Natural killer cell (primary cell): ENCODE measurements at regions of chr3 and their contacts with region 1.

Region 1: DNA sequence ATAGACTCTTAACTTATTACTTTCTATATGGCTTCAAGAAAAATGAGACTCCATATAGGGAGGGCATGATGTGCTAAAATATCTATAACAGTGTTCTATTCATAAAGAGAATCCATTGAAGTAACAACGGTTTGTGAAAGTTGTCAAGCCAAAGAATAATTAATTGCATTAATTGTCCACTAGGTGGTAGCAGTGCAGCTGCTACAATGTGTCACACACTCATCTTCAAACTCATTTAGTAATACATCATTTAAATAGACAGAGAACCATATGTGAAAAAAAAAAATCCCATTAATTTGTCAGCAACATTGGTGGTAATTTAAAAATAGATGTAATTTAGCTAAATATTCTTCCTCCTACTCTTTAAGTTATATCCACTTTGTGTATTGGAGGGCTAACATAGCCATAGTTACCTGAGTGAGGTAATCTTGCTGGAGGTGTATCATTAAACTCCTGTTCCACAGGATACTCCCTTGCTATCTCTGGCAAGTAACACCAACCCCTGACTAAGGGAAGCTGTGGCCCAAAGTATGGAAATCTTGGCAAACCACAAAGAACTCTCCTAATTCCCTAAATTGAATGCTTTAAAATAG is 3.7 kb upstream of the CPA3 start:
- DNase-seq: peak in 1 of 2 donors; percentile 60
- ATAC-seq: peak; percentile 60 to 67 (median 64)
- H3K4me3 ChIP-seq: no peak overlapping the region
- H3K4me3 Mint-ChIP-seq: no peak overlapping the region
- H3K27ac ChIP-seq: no peak overlapping the region
- H3K27ac Mint-ChIP-seq: no peak overlapping the region
- H3K4me1 ChIP-seq: no peaks in the 10 kb centered on the region
- H3K4me1 Mint-ChIP-seq: no peaks in the 10 kb centered on the region
- H3K27me3 ChIP-seq: no peaks in the 10 kb centered on the region
- H3K27me3 Mint-ChIP-seq: peaks cover 12 to 17% of the 10 kb centered on the region in 2 donors
- CTCF ChIP-seq: peak; percentile 66

Region 2: GRCh38 chr3:148943506-148944205 is 82.3 kb after region 1 on chr3:
- intact Hi-C with region 1: loop called (anchors 1 kb)
- DNase-seq: peak in 1 of 2 donors; percentile 64
- ATAC-seq: peak; percentile 91 to 98 (median 98)
- H3K4me3 ChIP-seq: no peak overlapping the region
- H3K4me3 Mint-ChIP-seq: no peak overlapping the region
- H3K27ac ChIP-seq: no peak overlapping the region
- H3K27ac Mint-ChIP-seq: no peak overlapping the region
- H3K4me1 ChIP-seq: no peaks in the 10 kb centered on the region
- H3K4me1 Mint-ChIP-seq: no peaks in the 10 kb centered on the region
- H3K27me3 ChIP-seq: no peaks in the 10 kb centered on the region
- H3K27me3 Mint-ChIP-seq: peaks cover 0 to 6% of the 10 kb centered on the region in 2 donors
- CTCF ChIP-seq: peak; percentile 72